Activated CD4-positive, alpha-beta T cell treated with anti-CD3 and anti-CD28 coated beads for 36 hours (primary cell): ENCODE measurements at regions of chr11 and their contacts with region 1.

Region 1: GRCh38 chr11:10540923-10541560 is at the start of gene RNF141:
- DNase-seq: peak; percentile 98
- ATAC-seq: peak; percentile 98
- H3K4me3 Mint-ChIP-seq: peak within 1 kb of the TSS; percentile 88
- H3K27ac Mint-ChIP-seq: peak within 1 kb of the TSS; percentile 58
- H3K4me1 Mint-ChIP-seq: peaks cover 17% of the 10 kb centered on the region
- H3K27me3 Mint-ChIP-seq: no peaks in the 10 kb centered on the region
- total RNA-seq, gene RNF141: 12.5 to 17.8 TPM

Region 2: GRCh38 chr11:10331548-10332289 is 209.3 kb before region 1 on chr11:
- CTCF ChIA-PET with region 1: no interaction called
- POLR2A ChIA-PET with region 1: no interaction called
- intact Hi-C with region 1: no loop called
- DNase-seq: no peak
- ATAC-seq: no peak
- H3K4me3 Mint-ChIP-seq: no peak overlapping the region
- H3K27ac Mint-ChIP-seq: no peak overlapping the region
- H3K4me1 Mint-ChIP-seq: no peaks in the 10 kb centered on the region
- H3K27me3 Mint-ChIP-seq: peaks cover 2% of the 10 kb centered on the region

Region 3: DNA sequence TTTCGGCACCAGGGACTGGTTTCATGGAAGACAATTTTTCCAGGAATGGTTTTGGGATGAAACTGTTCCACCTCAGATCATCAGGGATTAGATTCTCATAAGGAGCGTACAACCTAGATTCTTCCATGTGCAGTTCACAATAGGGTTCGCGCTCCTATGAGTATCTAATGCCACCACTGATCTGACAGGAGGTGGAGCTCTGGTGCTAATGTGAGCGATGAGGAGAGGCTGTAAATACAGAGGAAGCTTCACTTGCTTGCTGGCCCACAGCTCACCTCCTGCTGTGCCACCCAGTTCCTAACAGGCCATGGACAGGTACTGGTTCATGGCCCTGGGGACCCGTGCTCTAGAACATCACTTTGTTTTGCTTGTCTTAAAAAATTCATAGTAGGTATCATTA is 127.8 kb before region 1 on chr11:
- CTCF ChIA-PET with region 1: interaction called, 22 read pairs
- POLR2A ChIA-PET with region 1: no interaction called
- intact Hi-C with region 1: loop called (anchors 2 kb)
- DNase-seq: peak; percentile 70
- ATAC-seq: peak; percentile 94
- H3K4me3 Mint-ChIP-seq: no peak overlapping the region
- H3K27ac Mint-ChIP-seq: no peak overlapping the region
- H3K4me1 Mint-ChIP-seq: peaks cover 32% of the 10 kb centered on the region
- H3K27me3 Mint-ChIP-seq: no peaks in the 10 kb centered on the region

Region 4: GRCh38 chr11:10514210-10514609 is 26.8 kb before region 1 on chr11:
- CTCF ChIA-PET with region 1: interaction called, 12 read pairs
- POLR2A ChIA-PET with region 1: no interaction called
- intact Hi-C with region 1: no loop called
- DNase-seq: no peak
- ATAC-seq: no peak
- H3K4me3 Mint-ChIP-seq: no peak overlapping the region
- H3K27ac Mint-ChIP-seq: no peak overlapping the region
- H3K4me1 Mint-ChIP-seq: no peaks in the 10 kb centered on the region
- H3K27me3 Mint-ChIP-seq: no peaks in the 10 kb centered on the region

Region 5: GRCh38 chr11:10653926-10654810 is 113.1 kb after region 1 on chr11:
- CTCF ChIA-PET with region 1: interaction called, 16 read pairs
- POLR2A ChIA-PET with region 1: no interaction called
- intact Hi-C with region 1: loop called (anchors 1 kb)
- DNase-seq: peak; percentile 53
- ATAC-seq: peak; percentile 80
- H3K4me3 Mint-ChIP-seq: no peak overlapping the region
- H3K27ac Mint-ChIP-seq: no peak overlapping the region
- H3K4me1 Mint-ChIP-seq: peaks cover 20% of the 10 kb centered on the region
- H3K27me3 Mint-ChIP-seq: no peaks in the 10 kb centered on the region

Region 6: GRCh38 chr11:10735481-10736475 is 194.7 kb after region 1 on chr11:
- CTCF ChIA-PET with region 1: interaction called, 6 read pairs
- POLR2A ChIA-PET with region 1: no interaction called
- intact Hi-C with region 1: loop called (anchors 1 to 10 kb)
- DNase-seq: peak; percentile 95
- ATAC-seq: peak; percentile 99
- H3K4me3 Mint-ChIP-seq: peak overlapping the region; percentile 11
- H3K27ac Mint-ChIP-seq: peak overlapping the region; percentile 2
- H3K4me1 Mint-ChIP-seq: peaks cover 10% of the 10 kb centered on the region
- H3K27me3 Mint-ChIP-seq: no peaks in the 10 kb centered on the region

Region 7: DNA sequence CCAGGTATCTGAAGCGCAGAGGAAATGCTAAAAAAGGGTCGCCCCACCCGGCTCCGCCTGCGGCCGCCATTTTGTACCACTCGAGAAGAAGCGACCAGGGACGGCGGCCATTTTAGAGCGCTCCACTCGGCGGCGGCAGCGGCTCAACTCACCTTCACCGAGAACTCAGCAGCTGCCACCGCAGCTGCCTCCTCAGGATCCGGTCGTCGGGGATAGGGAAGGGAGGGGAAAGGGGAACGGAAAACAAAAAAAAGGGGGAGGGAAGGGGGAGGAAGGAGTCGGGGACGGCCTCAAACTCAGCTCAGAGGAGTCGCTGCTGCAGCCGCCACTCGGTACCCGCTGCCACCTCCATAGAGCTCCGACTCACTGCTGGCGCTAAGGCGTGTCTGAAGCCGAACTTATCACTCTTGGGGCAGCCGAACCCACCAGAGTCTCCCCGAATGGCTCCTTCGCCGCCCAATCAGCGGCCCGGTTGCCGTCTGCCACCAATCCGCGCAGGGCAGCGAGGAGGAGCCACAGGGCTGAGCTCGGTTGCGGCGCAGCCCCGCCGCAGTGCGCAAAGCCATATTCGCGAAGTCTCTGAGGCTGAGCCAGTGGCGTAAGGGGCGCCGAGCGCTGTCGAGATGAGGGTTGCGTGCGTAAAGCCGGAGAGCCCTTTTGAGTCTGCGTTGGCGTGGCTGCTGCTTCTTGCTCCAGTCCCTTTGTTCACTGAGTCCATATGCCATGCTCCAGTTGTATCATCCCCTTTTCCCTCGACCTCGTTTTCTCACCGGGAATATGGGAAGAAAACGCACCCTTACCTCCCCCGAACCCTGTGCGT is 267.7 kb after region 1 on chr11 and contains the start of gene EIF4G2:
- CTCF ChIA-PET with region 1: interaction called, 3 read pairs
- POLR2A ChIA-PET with region 1: interaction called, 3 read pairs
- intact Hi-C with region 1: loop called in 1 of 2 experiments (anchors 2 kb)
- DNase-seq: peak; percentile 98
- ATAC-seq: peak; percentile 96
- H3K4me3 Mint-ChIP-seq: peak within 1 kb of the TSS; percentile 93
- H3K27ac Mint-ChIP-seq: peak within 1 kb of the TSS; percentile 96
- H3K4me1 Mint-ChIP-seq: peaks cover 42% of the 10 kb centered on the region
- H3K27me3 Mint-ChIP-seq: peaks cover 2% of the 10 kb centered on the region
- total RNA-seq, gene EIF4G2: 953 to 1,693 TPM

Region 8: GRCh38 chr11:11621573-11622319 is 1080.7 kb after region 1 on chr11 and contains the start of gene GALNT18:
- CTCF ChIA-PET with region 1: no interaction called
- POLR2A ChIA-PET with region 1: no interaction called
- intact Hi-C with region 1: loop called in 1 of 2 experiments (anchors 5 kb)
- DNase-seq: peak; percentile 94
- ATAC-seq: peak; percentile 99
- H3K4me3 Mint-ChIP-seq: peak within 1 kb of the TSS; percentile 80
- H3K27ac Mint-ChIP-seq: peak within 1 kb of the TSS; percentile 63
- H3K4me1 Mint-ChIP-seq: peaks cover 5% of the 10 kb centered on the region
- H3K27me3 Mint-ChIP-seq: peaks cover 37% of the 10 kb centered on the region
- total RNA-seq, gene GALNT18: 6.9 to 8.8 TPM